ENCODE measurements at regions of chr17 and their contacts with region 1.

Region 1: GRCh38 chr17:44123356-44124117 is at the start of gene HDAC5:
- DNase-seq: peak; percentile 98
- ATAC-seq: peak; percentile 97
- H3K4me3 Mint-ChIP-seq: peak within 1 kb of the TSS; percentile 87
- H3K27ac Mint-ChIP-seq: peak within 1 kb of the TSS; percentile 97
- H3K4me1 Mint-ChIP-seq: peaks cover 22% of the 10 kb centered on the region
- H3K27me3 Mint-ChIP-seq: no peaks in the 10 kb centered on the region
- total RNA-seq, gene HDAC5: 16.5 to 22.0 TPM

Region 2: DNA sequence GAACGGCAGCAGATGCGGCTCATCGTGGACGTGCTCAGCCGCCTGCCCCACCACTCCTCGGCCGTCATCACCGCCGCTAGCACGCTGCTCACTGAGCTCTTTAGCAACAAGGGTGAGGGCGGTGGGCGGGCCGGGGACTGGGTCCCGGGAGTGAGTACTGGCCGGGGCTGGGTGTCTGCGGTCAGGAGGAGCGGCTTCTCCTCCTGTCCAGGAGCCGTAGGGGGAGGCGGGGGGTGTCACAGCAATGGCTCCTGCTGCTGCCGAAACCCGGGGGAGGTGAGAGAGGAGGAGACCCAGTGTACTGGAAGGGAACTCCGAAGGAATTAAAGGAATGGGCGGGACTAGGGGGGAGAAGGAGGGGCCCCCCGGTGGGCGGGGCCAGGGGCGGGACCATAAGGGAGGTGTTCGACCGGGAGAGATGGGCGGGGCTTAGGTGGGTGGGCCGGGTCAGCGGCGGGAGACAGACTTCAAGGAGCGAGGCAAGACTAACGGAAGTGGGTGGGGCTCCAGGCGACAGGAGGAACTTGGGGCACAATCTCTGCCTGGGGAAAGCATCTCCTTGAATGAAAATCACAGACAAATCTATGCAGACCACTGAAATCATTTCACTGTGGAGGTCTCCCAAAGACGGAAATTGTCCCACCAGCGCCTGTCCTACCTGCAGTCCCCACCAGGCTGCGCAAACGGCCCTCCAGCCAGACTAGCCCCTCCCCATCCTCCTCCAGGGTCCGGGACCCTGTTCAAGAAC is 116.8 kb before region 1 on chr17:
- CTCF ChIA-PET with region 1: no interaction called
- POLR2A ChIA-PET with region 1: no interaction called
- intact Hi-C with region 1: loop called in 1 of 2 experiments (anchors 1 kb)
- DNase-seq: peak; percentile 99
- ATAC-seq: peak; percentile 84
- H3K4me3 Mint-ChIP-seq: peak overlapping the region; percentile 78
- H3K27ac Mint-ChIP-seq: peak overlapping the region; percentile 86
- H3K4me1 Mint-ChIP-seq: peaks cover 20% of the 10 kb centered on the region
- H3K27me3 Mint-ChIP-seq: peaks cover 17% of the 10 kb centered on the region

Region 3: DNA sequence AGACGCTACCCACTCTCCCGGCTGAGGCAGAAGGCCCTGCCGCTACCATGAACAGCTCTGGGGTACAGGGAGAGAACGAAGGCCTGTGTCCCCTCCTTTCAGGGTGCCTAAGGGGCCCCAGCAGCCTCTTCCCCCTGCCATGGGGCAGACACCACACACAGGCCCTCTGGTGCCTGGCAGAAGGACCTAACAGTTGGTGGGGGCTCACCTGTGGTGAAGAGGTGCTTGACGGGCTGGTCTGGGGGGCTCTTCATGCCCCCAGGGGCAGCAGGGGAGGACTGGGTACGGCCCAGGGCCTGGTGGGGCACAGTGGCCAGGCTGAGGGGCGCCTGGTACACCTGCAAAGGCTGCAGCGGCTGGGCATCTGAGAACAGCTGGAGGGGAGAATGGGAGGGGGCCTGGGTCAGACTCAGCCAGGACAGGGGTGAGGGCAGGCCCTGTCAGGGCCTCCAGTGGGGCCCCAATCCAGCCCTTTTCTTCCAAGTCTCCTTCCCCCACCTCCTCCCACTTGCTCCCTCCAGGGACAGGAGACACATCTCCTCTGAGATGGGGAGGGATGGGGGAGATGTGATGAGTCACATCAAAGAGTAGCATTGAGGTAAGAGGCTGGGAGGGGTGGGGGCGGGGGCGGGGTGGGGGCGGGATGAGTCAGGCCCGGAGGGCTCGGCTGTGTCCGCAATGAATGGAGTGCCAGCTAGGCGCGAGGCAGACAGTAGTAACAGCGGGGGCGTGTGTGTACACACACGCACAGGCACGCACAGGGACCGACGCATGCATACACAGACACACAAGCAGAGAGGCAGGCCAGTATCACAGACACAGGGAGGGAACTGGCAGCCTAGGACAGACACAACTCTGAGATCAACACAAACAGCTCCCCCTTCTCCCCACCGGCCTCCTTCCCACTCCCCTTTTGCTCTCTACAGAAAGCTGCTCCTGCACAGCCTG is 36.9 kb before region 1 on chr17:
- CTCF ChIA-PET with region 1: interaction called, 3 read pairs
- POLR2A ChIA-PET with region 1: interaction called, 3 read pairs
- intact Hi-C with region 1: loop called in 1 of 2 experiments (anchors 1 kb)
- DNase-seq: peak; percentile 83
- ATAC-seq: peak; percentile 91
- H3K4me3 Mint-ChIP-seq: no peak overlapping the region
- H3K27ac Mint-ChIP-seq: peak overlapping the region; percentile 63
- H3K4me1 Mint-ChIP-seq: peaks cover 15% of the 10 kb centered on the region
- H3K27me3 Mint-ChIP-seq: no peaks in the 10 kb centered on the region

Measured in activated CD4-positive, alpha-beta T cell treated with anti-CD3 and anti-CD28 coated beads for 36 hours (primary cell).